CD4-positive, alpha-beta memory T cell (primary cell): ENCODE measurements at regions of chr20 and their contacts with region 1.

Region 1: GRCh38 chr20:32406701-32407100 is 48.6 kb downstream of the ASXL1 start:
- DNase-seq: no peak
- H3K4me3 ChIP-seq: no peak overlapping the region
- H3K4me3 Mint-ChIP-seq: peak overlapping the region in 6 of 8 donors; percentile 62 to 85 (median 79)
- H3K27ac ChIP-seq: no peak overlapping the region
- H3K27ac Mint-ChIP-seq: peak overlapping the region; percentile 74 to 97 (median 86)
- H3K4me1 ChIP-seq: peaks cover 37% of the 10 kb centered on the region
- H3K4me1 Mint-ChIP-seq: peaks cover 19 to 60% (median 44%) of the 10 kb centered on the region in 4 donors
- H3K27me3 ChIP-seq: no peaks in the 10 kb centered on the region
- H3K27me3 Mint-ChIP-seq: no peaks in the 10 kb centered on the region

Region 2: GRCh38 chr20:32336918-32337347 is 69.8 kb before region 1 on chr20:
- CTCF ChIA-PET with region 1: no interaction called
- POLR2A ChIA-PET with region 1: no interaction called
- intact Hi-C with region 1: loop called (anchors 1 kb)
- DNase-seq: peak in 1 of 5 donors; percentile 13
- H3K4me3 ChIP-seq: no peak overlapping the region
- H3K4me3 Mint-ChIP-seq: no peak overlapping the region
- H3K27ac ChIP-seq: no peak overlapping the region
- H3K27ac Mint-ChIP-seq: peak overlapping the region in 2 of 7 donors; percentile 7 to 17
- H3K4me1 ChIP-seq: peaks cover 27% of the 10 kb centered on the region
- H3K4me1 Mint-ChIP-seq: peaks cover 21 to 36% (median 26%) of the 10 kb centered on the region in 4 donors
- H3K27me3 ChIP-seq: no peaks in the 10 kb centered on the region
- H3K27me3 Mint-ChIP-seq: no peaks in the 10 kb centered on the region

Region 3: DNA sequence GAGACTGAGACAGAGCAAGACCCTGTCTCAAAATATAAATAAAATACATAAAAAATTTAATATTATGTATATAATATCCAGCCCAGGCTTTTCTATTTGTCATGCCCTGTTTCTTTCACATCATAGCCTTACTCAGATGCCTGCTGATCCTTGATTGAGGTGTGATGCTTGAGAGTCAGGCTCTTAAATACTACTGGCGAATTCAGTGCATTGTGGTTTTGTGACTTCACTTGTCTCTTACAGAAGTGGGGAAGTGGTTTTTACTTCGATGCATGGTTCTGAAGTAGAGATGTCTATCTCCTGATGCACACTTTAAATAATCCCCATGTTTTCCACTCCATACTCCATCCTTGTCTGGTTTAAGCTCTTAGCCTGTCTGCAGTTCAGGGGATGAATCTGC is 19.4 kb before region 1 on chr20:
- CTCF ChIA-PET with region 1: no interaction called
- POLR2A ChIA-PET with region 1: interaction called, 4 read pairs
- intact Hi-C with region 1: loop called (anchors 2 kb)
- DNase-seq: peak; percentile 65 to 81 (median 76)
- H3K4me3 ChIP-seq: no peak overlapping the region
- H3K4me3 Mint-ChIP-seq: peak overlapping the region in 7 of 8 donors; percentile 4 to 65 (median 27)
- H3K27ac ChIP-seq: no peak overlapping the region
- H3K27ac Mint-ChIP-seq: peak overlapping the region; percentile 43 to 95 (median 62)
- H3K4me1 ChIP-seq: peaks cover 42% of the 10 kb centered on the region
- H3K4me1 Mint-ChIP-seq: peaks cover 43 to 68% (median 54%) of the 10 kb centered on the region in 4 donors
- H3K27me3 ChIP-seq: no peaks in the 10 kb centered on the region
- H3K27me3 Mint-ChIP-seq: no peaks in the 10 kb centered on the region